IMR-90 (cell line): ENCODE measurements at regions of chr1 and their contacts with region 1.

Region 1: DNA sequence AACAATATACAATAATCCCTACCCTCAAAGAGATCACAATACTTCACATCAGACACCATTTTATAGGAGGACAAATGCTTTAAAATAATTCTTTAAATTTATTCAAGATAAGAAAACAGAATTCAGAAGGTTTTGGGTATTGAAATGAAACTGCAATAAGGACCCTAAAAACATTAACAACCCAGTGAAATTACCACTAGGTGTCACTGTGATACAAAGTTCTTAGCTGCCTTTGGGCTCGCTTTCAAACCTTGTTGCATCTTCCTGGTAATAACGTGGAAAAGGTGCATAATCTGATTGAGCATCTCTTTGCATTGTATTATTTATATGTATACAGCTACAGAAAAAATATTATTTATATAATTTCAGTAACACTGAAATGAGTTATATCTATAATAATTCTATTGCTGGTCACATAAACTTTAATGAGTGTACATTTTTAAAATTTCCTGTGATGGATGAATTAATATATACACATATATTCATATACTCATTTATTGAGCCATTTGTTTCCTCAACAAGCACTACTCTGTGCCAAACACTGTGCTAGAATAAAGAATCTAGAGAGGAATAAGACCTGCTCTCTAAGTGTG is 185.2 kb downstream of the FAF1 start:
- DNase-seq: peak; percentile 74
- ATAC-seq: peak; percentile 60
- H3K4me3 ChIP-seq: no peak overlapping the region
- H3K27ac ChIP-seq: no peak overlapping the region
- H3K4me1 ChIP-seq: no peaks in the 10 kb centered on the region
- H3K27me3 ChIP-seq: no peaks in the 10 kb centered on the region
- CTCF ChIP-seq: peak; percentile 78
- POLR2A ChIP-seq: no peak
- RAD21 ChIP-seq: peak; percentile 83

Region 2: DNA sequence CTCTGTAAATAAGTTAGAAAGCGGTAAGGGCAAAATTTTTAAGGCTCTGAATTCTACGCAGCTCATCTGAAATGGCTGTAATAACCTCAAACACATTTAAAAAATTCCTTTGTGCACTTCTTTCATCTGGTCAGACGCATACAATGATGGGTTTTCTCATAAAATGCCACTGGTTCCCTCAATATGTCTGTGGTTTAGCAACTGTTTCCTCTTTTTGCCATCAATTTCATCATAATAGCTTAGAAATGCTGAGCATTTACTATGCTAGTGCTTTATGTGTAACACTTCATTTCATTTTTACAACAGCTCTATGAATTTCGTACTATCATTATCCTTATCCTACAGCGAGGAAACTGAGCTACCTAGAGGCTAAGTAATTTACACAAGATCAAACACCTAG is 316.3 kb before region 1 on chr1:
- CTCF ChIA-PET with region 1: no interaction called
- POLR2A ChIA-PET with region 1: no interaction called
- dilution Hi-C with region 1: no loop called
- in situ Hi-C with region 1: no loop called
- intact Hi-C with region 1: no loop called
- DNase-seq: no peak
- ATAC-seq: no peak
- H3K4me3 ChIP-seq: no peak overlapping the region
- H3K27ac ChIP-seq: no peak overlapping the region
- H3K4me1 ChIP-seq: no peaks in the 10 kb centered on the region
- H3K27me3 ChIP-seq: no peaks in the 10 kb centered on the region
- CTCF ChIP-seq: no peak
- POLR2A ChIP-seq: no peak
- RAD21 ChIP-seq: no peak

Region 3: GRCh38 chr1:50861772-50862171 is 86.9 kb after region 1 on chr1:
- CTCF ChIA-PET with region 1: no interaction called
- POLR2A ChIA-PET with region 1: no interaction called
- dilution Hi-C with region 1: no loop called
- in situ Hi-C with region 1: no loop called
- intact Hi-C with region 1: no loop called
- DNase-seq: no peak
- ATAC-seq: no peak
- H3K4me3 ChIP-seq: no peak overlapping the region
- H3K27ac ChIP-seq: no peak overlapping the region
- H3K4me1 ChIP-seq: no peaks in the 10 kb centered on the region
- H3K27me3 ChIP-seq: no peaks in the 10 kb centered on the region
- CTCF ChIP-seq: no peak
- POLR2A ChIP-seq: no peak
- RAD21 ChIP-seq: no peak

Region 4: GRCh38 chr1:50929376-50929958 is 154.6 kb after region 1 on chr1:
- CTCF ChIA-PET with region 1: interaction called, 9 read pairs
- POLR2A ChIA-PET with region 1: no interaction called
- dilution Hi-C with region 1: no loop called
- in situ Hi-C with region 1: no loop called
- intact Hi-C with region 1: loop called (anchors 1 kb)
- DNase-seq: peak; percentile 59
- ATAC-seq: peak; percentile 54; the same call in 1 of the 2 replicates
- H3K4me3 ChIP-seq: no peak overlapping the region
- H3K27ac ChIP-seq: no peak overlapping the region
- H3K4me1 ChIP-seq: peaks cover 2% of the 10 kb centered on the region; the same call in 1 of the 2 replicates
- H3K27me3 ChIP-seq: no peaks in the 10 kb centered on the region
- CTCF ChIP-seq: peak; percentile 61
- POLR2A ChIP-seq: no peak
- RAD21 ChIP-seq: peak; percentile 52

Region 5: GRCh38 chr1:50968158-50968820 is 193.4 kb after region 1 on chr1:
- CTCF ChIA-PET with region 1: no interaction called
- POLR2A ChIA-PET with region 1: no interaction called
- dilution Hi-C with region 1: no loop called
- in situ Hi-C with region 1: no loop called
- intact Hi-C with region 1: loop called (anchors 2 kb)
- DNase-seq: peak; percentile 89
- ATAC-seq: peak; percentile 86
- H3K4me3 ChIP-seq: peak overlapping the region; percentile 88
- H3K27ac ChIP-seq: peak overlapping the region; percentile 95
- H3K4me1 ChIP-seq: no peaks in the 10 kb centered on the region
- H3K27me3 ChIP-seq: no peaks in the 10 kb centered on the region
- CTCF ChIP-seq: peak; percentile 42
- POLR2A ChIP-seq: peak; percentile 71
- RAD21 ChIP-seq: no peak

Region 6: DNA sequence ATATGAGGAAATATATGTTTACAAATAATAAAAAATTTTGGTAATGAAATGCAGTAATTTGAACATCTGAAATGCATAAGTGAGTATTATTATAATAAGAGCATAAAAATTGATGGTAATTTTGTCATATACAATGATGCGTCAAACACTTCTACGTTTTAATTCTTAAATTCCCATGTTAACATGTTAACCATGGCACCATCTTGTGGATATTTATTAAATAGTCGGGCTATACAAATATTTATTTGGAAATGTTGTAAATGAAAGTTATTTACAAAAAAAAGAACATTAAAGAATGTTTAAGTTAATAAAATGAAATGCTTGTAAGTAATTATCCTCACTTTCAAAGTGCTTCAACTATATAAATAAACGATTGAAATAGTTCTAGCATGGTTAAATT is 270.0 kb after region 1 on chr1:
- CTCF ChIA-PET with region 1: interaction called, 3 read pairs
- POLR2A ChIA-PET with region 1: no interaction called
- dilution Hi-C with region 1: no loop called
- in situ Hi-C with region 1: no loop called
- intact Hi-C with region 1: loop called (anchors 5 kb)
- DNase-seq: no peak
- ATAC-seq: no peak
- H3K4me3 ChIP-seq: no peak overlapping the region
- H3K27ac ChIP-seq: no peak overlapping the region
- H3K4me1 ChIP-seq: no peaks in the 10 kb centered on the region
- H3K27me3 ChIP-seq: no peaks in the 10 kb centered on the region; the same call in 1 of the 2 replicates
- CTCF ChIP-seq: peak; percentile 32
- POLR2A ChIP-seq: no peak
- RAD21 ChIP-seq: peak; percentile 22

Region 7: GRCh38 chr1:51058858-51059257 is 284.0 kb after region 1 on chr1:
- CTCF ChIA-PET with region 1: interaction called, 5 read pairs
- POLR2A ChIA-PET with region 1: no interaction called
- dilution Hi-C with region 1: no loop called
- in situ Hi-C with region 1: no loop called
- intact Hi-C with region 1: loop called (anchors 2 kb)
- DNase-seq: peak; percentile 37
- ATAC-seq: peak; percentile 75
- H3K4me3 ChIP-seq: no peak overlapping the region
- H3K27ac ChIP-seq: no peak overlapping the region
- H3K4me1 ChIP-seq: peaks cover 4% of the 10 kb centered on the region; the same call in 1 of the 2 replicates
- H3K27me3 ChIP-seq: peaks cover 2% of the 10 kb centered on the region
- CTCF ChIP-seq: peak; percentile 60
- POLR2A ChIP-seq: no peak
- RAD21 ChIP-seq: peak; percentile 75

Region 8: GRCh38 chr1:51296383-51297357 is 521.8 kb after region 1 on chr1:
- CTCF ChIA-PET with region 1: interaction called, 3 read pairs
- POLR2A ChIA-PET with region 1: no interaction called
- dilution Hi-C with region 1: no loop called
- in situ Hi-C with region 1: no loop called
- intact Hi-C with region 1: loop called (anchors 1 kb)
- DNase-seq: peak; percentile 62
- ATAC-seq: peak; percentile 98
- H3K4me3 ChIP-seq: peak overlapping the region; percentile 11; the same call in 1 of the 2 replicates
- H3K27ac ChIP-seq: no peak overlapping the region
- H3K4me1 ChIP-seq: no peaks in the 10 kb centered on the region
- H3K27me3 ChIP-seq: no peaks in the 10 kb centered on the region
- CTCF ChIP-seq: peak; percentile 90
- POLR2A ChIP-seq: no peak
- RAD21 ChIP-seq: peak; percentile 86